ENCODE measurements at regions of chr3 and their contacts with region 1.

Region 1: DNA sequence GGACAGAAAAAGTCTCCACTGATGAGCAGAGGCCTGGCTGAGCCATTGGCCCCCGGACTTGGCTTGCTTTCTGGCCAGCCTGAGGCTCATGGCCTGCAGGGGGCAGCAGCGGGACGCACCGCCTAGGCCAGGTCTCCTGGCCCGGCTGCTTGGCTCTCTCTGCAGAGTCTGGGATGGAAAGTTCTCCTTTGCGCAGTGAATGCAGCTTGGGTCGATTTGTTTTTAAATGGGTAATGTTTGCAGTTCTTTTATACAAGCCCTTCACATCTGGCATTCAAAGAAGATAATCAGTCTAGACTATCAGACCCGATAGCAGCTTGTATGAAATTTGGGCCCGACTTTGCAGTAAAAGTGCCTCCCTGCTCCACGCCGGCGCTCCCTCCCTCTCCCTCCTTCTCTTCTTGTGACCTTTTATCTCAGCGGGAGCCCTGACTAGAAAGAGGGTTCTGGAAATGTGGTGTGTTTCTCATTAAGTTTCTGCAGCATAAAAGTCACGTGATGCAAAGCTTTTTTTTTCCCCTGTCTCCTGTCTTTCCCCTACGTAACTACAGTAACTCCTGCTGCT is 59.9 kb downstream of the ZNF621 start:
- DNase-seq: peak; percentile 65 to 97
- H3K4me3 ChIP-seq: peak overlapping the region in 3 of 4 experiments; percentile 14 to 54 (median 27); a peak in 5 of 8 replicates
- H3K27ac ChIP-seq: no peak overlapping the region
- H3K4me1 ChIP-seq: peaks cover 0 to 14% (median 6%) of the 10 kb centered on the region in 4 experiments; a peak in 6 of 7 replicates
- H3K27me3 ChIP-seq: no peaks in the 10 kb centered on the region
- CTCF ChIP-seq: peak; percentile 90 to 98 (median 95)
- EP300 ChIP-seq: no peak
- POLR2A ChIP-seq: no peak
- RAD21 ChIP-seq: peak; percentile 91 to 96

Region 2: DNA sequence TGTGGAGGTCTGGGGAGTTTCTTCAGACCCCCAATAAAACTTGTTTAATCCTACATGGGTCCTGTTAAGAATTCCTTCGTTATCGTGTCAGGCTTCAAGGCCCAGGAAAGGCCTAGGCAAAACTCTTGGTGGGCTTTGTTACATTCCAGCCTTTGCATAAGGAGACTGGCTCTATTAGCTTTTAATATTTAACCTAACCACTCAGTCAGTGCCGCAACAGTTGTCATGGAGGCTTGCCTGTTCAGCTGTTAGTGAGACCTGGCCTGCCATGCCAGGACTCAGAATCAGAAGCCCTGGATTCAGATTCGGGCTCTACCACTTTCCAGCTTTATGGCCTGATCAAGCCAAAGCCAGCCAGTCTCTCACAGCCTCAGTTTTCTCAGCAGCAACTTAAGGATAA is 255.6 kb before region 1 on chr3:
- CTCF ChIA-PET with region 1: interaction called, 10 read pairs
- POLR2A ChIA-PET with region 1: no interaction called
- DNase-seq: no peak
- H3K4me3 ChIP-seq: no peak overlapping the region
- H3K27ac ChIP-seq: no peak overlapping the region
- H3K4me1 ChIP-seq: peaks cover 0 to 16% (median 5%) of the 10 kb centered on the region in 4 experiments; a peak in 6 of 7 replicates
- H3K27me3 ChIP-seq: no peaks in the 10 kb centered on the region
- CTCF ChIP-seq: no peak
- EP300 ChIP-seq: no peak
- POLR2A ChIP-seq: no peak
- RAD21 ChIP-seq: no peak

Region 3: GRCh38 chr3:40602778-40603385 is 18.2 kb after region 1 on chr3:
- CTCF ChIA-PET with region 1: interaction called, 14 read pairs
- POLR2A ChIA-PET with region 1: no interaction called
- DNase-seq: no peak
- H3K4me3 ChIP-seq: no peak overlapping the region
- H3K27ac ChIP-seq: no peak overlapping the region
- H3K4me1 ChIP-seq: no peaks in the 10 kb centered on the region
- H3K27me3 ChIP-seq: no peaks in the 10 kb centered on the region
- CTCF ChIP-seq: no peak
- EP300 ChIP-seq: no peak
- POLR2A ChIP-seq: no peak
- RAD21 ChIP-seq: no peak

Region 4: DNA sequence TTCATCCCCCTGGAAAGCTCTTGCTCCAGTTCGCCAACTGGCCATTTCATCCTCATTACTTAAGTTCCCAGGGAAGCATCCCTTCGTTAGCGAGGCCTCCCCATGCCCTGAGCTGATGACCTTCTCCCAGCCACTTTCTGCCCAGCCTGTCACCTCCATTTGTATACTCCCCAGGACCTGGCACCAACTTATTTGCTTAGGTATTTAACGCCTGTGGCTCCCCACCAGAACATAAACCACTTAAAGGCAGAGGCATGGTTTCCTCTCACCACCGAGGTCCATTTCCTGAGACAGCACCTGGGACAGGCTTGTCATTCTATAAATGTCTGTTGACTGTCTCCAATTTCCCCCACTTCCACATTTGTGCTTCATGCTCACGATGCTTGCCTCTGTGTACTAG is 129.1 kb after region 1 on chr3:
- CTCF ChIA-PET with region 1: interaction called, 12 read pairs
- POLR2A ChIA-PET with region 1: no interaction called
- DNase-seq: no peak
- H3K4me3 ChIP-seq: no peak overlapping the region
- H3K27ac ChIP-seq: no peak overlapping the region
- H3K4me1 ChIP-seq: no peaks in the 10 kb centered on the region
- H3K27me3 ChIP-seq: no peaks in the 10 kb centered on the region; a peak in 1 of 7 replicates
- CTCF ChIP-seq: no peak
- EP300 ChIP-seq: no peak
- POLR2A ChIP-seq: no peak
- RAD21 ChIP-seq: no peak

Region 5: GRCh38 chr3:40869939-40870338 is 285.2 kb after region 1 on chr3:
- CTCF ChIA-PET with region 1: interaction called, 15 read pairs
- POLR2A ChIA-PET with region 1: no interaction called
- DNase-seq: peak in 1 of 2 experiments; percentile 51
- H3K4me3 ChIP-seq: no peak overlapping the region
- H3K27ac ChIP-seq: no peak overlapping the region
- H3K4me1 ChIP-seq: no peaks in the 10 kb centered on the region
- H3K27me3 ChIP-seq: no peaks in the 10 kb centered on the region
- CTCF ChIP-seq: peak; percentile 46 to 63 (median 54)
- EP300 ChIP-seq: no peak
- POLR2A ChIP-seq: no peak
- RAD21 ChIP-seq: peak; percentile 39 to 55

Measured in H1 (cell line).